Activated naive CD4-positive, alpha-beta T cell treated with anti-CD3 and anti-CD28 coated beads for 36 hours (primary cell): ENCODE measurements at regions of chr19 and their contacts with region 1.

Region 1: GRCh38 chr19:21851596-21852345 is 15.8 kb upstream of the ZNF43 start:
- DNase-seq: peak; percentile 97
- H3K4me3 Mint-ChIP-seq: peak overlapping the region; percentile 88
- H3K27ac Mint-ChIP-seq: peak overlapping the region; percentile 91
- H3K4me1 Mint-ChIP-seq: peaks cover 31% of the 10 kb centered on the region
- H3K27me3 Mint-ChIP-seq: no peaks in the 10 kb centered on the region

Region 2: GRCh38 chr19:21568816-21569493 is 282.8 kb before region 1 on chr19:
- CTCF ChIA-PET with region 1: interaction called, 3 read pairs
- intact Hi-C with region 1: loop called (anchors 2 kb)
- DNase-seq: peak; percentile 94
- H3K4me3 Mint-ChIP-seq: peak overlapping the region; percentile 99
- H3K27ac Mint-ChIP-seq: peak overlapping the region; percentile 99
- H3K4me1 Mint-ChIP-seq: peaks cover 30% of the 10 kb centered on the region
- H3K27me3 Mint-ChIP-seq: no peaks in the 10 kb centered on the region

Region 3: GRCh38 chr19:21835810-21836444 is 15.8 kb before region 1 on chr19 and contains the start of gene ZNF43:
- CTCF ChIA-PET with region 1: interaction called, 6 read pairs
- intact Hi-C with region 1: loop called (anchors 1 kb)
- DNase-seq: peak; percentile 97
- H3K4me3 Mint-ChIP-seq: peak within 1 kb of the TSS; percentile 98
- H3K27ac Mint-ChIP-seq: peak within 1 kb of the TSS; percentile 99
- H3K4me1 Mint-ChIP-seq: peaks cover 37% of the 10 kb centered on the region
- H3K27me3 Mint-ChIP-seq: no peaks in the 10 kb centered on the region
- total RNA-seq, gene ZNF43: 25.8 to 27.8 TPM

Region 4: GRCh38 chr19:22052644-22053013 is 200.9 kb after region 1 on chr19:
- CTCF ChIA-PET with region 1: no interaction called
- intact Hi-C with region 1: loop called (anchors 2 kb)
- DNase-seq: peak; percentile 26
- H3K4me3 Mint-ChIP-seq: peak overlapping the region; percentile 94
- H3K27ac Mint-ChIP-seq: peak overlapping the region; percentile 85
- H3K4me1 Mint-ChIP-seq: no peaks in the 10 kb centered on the region
- H3K27me3 Mint-ChIP-seq: no peaks in the 10 kb centered on the region

Region 5: GRCh38 chr19:22634450-22634827 is 782.7 kb after region 1 on chr19:
- CTCF ChIA-PET with region 1: no interaction called
- intact Hi-C with region 1: loop called (anchors 10 kb)
- DNase-seq: peak; percentile 7
- H3K4me3 Mint-ChIP-seq: peak overlapping the region; percentile 94
- H3K27ac Mint-ChIP-seq: peak overlapping the region; percentile 87
- H3K4me1 Mint-ChIP-seq: peaks cover 8% of the 10 kb centered on the region
- H3K27me3 Mint-ChIP-seq: no peaks in the 10 kb centered on the region